Activated B cell treated with CpG ODN at 0.5 μM for 24 hours (primary cell): ENCODE measurements at regions of chr4 and their contacts with region 1.

Region 1: DNA sequence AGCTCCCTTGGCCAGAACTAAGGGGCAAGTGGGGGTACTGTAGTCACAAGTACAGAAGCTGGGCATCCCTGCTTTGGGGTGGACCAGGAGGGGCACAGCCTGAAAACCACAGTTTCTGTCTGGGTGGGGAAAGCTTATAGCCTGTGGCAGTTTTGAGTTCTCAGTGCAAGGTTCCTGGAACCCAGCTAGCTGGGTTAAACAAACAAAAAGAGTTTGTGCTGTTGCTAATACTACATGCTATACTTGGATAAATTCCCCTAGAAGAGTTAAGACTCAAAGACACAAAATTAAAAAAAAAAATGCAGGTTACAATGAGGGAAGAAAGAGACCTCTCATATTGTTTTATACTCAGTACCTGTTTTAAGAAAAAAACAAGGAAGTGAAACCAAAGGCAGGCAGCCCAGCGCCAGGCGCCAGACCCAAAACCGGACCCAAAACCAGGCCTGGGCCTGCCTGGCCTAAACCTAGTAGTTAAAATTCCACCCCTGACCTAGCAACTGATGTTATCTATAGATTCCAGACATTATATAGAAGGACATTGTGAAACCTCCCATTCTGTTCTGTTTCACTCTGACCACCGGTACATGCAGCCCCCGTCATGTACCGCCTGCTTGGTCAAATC is 50.8 kb downstream of the SLC2A9 start:
- DNase-seq: no peak
- ATAC-seq: peak; percentile 61
- H3K4me3 Mint-ChIP-seq: no peak overlapping the region
- H3K27ac Mint-ChIP-seq: peak overlapping the region; percentile 73
- H3K4me1 Mint-ChIP-seq: peaks cover 15% of the 10 kb centered on the region
- H3K27me3 Mint-ChIP-seq: no peaks in the 10 kb centered on the region
- CTCF ChIP-seq: no peak

Region 2: GRCh38 chr4:10006231-10006600 is 35.7 kb after region 1 on chr4:
- CTCF ChIA-PET with region 1: no interaction called
- POLR2A ChIA-PET with region 1: no interaction called
- intact Hi-C with region 1: loop called (anchors 5 kb)
- DNase-seq: no peak
- ATAC-seq: peak; percentile 77
- H3K4me3 Mint-ChIP-seq: peak overlapping the region; percentile 9
- H3K27ac Mint-ChIP-seq: peak overlapping the region; percentile 57
- H3K4me1 Mint-ChIP-seq: peaks cover 24% of the 10 kb centered on the region
- H3K27me3 Mint-ChIP-seq: no peaks in the 10 kb centered on the region
- CTCF ChIP-seq: no peak